ENCODE measurements at regions of chr3 and their contacts with region 1.

Region 1: DNA sequence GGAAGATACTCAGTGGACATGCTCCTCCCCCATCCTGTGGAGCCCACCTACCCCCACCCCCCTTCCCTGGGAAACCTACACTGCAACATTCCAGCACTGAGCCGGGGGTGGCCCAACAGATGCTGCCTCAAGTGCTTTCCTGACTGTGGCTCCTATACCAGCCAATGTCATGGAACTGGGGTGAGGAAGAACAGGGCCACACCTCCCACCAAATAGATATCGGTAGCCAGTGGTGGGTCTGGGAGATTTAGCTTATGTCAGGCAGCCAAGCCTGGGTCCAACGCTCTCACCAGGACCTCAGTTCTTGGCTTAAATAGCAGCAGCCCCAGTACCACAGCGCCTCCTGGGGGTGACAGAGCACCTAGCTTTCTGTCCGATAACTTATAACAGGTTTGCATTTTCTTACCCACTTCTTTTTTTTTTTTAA is 30.3 kb downstream of the CDC25A start:
- DNase-seq: peak; percentile 50
- ATAC-seq: peak; percentile 15
- H3K4me3 ChIP-seq: no peak overlapping the region
- H3K27ac ChIP-seq: peak overlapping the region; percentile 16; the same call in 1 of the 2 replicates
- H3K4me1 ChIP-seq: peaks cover 44% of the 10 kb centered on the region
- H3K27me3 ChIP-seq: no peaks in the 10 kb centered on the region
- CTCF ChIP-seq: peak; percentile 88

Region 2: DNA sequence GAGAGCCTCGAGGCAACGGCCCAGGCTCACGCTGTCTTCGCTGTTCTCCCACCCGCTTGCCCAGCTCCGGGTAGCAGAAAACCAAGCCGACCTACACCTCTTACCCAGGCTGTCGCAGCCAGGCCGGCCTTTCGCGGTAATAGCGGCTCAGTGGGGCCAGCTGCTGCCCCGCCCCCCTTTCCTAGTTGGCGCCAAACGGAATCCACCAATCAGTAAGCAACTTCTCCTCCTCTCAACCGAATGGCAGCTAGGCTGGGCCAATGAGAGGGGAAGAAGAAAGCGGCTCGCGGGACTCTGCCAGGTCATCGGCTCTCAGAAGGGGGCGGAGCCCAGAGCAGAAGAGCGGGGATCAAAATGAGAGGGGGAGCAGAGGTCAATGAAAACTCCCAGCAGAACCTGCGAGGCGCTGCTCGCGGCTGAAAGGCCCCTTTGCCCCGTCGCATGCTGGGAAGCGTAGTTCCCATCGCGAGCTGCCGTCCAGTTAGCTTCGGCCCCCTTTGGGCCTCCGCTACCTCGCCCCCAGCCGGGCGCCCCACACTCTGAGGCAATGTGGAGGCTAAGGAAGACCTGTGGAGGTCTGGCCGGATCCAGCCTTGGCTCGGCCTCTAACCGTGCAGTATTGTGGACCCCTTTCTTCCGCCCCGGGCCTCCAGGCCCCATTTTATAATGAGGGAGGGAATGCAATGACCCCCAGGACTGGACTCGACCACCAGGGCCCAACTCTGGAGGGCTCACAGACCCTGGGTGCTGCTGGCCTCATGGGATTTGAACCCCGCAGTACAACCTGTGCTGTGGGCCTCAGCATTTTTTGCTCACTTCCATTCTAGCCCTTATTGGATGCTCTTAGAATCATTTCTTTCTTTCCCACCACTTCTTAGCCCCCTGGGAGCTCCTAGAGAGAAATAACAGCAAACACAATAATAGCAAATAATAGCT is 30.6 kb after region 1 on chr3 and contains the start of gene CDC25A:
- CTCF ChIA-PET with region 1: no interaction called
- POLR2A ChIA-PET with region 1: no interaction called
- intact Hi-C with region 1: loop called (anchors 2 kb)
- DNase-seq: peak; percentile 99
- ATAC-seq: peak; percentile 93
- H3K4me3 ChIP-seq: peak within 1 kb of the TSS; percentile 74
- H3K27ac ChIP-seq: peak within 1 kb of the TSS; percentile 62
- H3K4me1 ChIP-seq: peaks cover 17% of the 10 kb centered on the region; the same call in 1 of the 2 replicates
- H3K27me3 ChIP-seq: no peaks in the 10 kb centered on the region
- CTCF ChIP-seq: no peak
- total RNA-seq, gene CDC25A: 42.4 and 43.0 TPM in 2 replicates

Measured in PC-3 (cell line).